ENCODE measurements at regions of chr17 and their contacts with region 1.

Region 1: GRCh38 chr17:78241277-78242023 is 10.0 kb downstream of the TMEM235 start:
- DNase-seq: no peak
- H3K4me3 ChIP-seq: no peak overlapping the region
- H3K27ac ChIP-seq: no peak overlapping the region
- H3K4me1 ChIP-seq: no peaks in the 10 kb centered on the region
- H3K27me3 ChIP-seq: no peaks in the 10 kb centered on the region
- CTCF ChIP-seq: no peak
- EP300 ChIP-seq: no peak
- POLR2A ChIP-seq: no peak

Region 2: GRCh38 chr17:78107457-78107856 is 134.0 kb before region 1 on chr17:
- in situ Hi-C with region 1: loop called in 3 of 4 experiments (anchors 10 kb)
- intact Hi-C with region 1: no loop called
- DNase-seq: no peak
- H3K4me3 ChIP-seq: no peak overlapping the region
- H3K27ac ChIP-seq: no peak overlapping the region
- H3K4me1 ChIP-seq: peaks cover 0 to under 1% (median 0%) of the 10 kb centered on the region in 4 donors
- H3K27me3 ChIP-seq: no peaks in the 10 kb centered on the region
- CTCF ChIP-seq: no peak
- EP300 ChIP-seq: no peak
- POLR2A ChIP-seq: no peak

Measured in transverse colon (tissue), 4 donors.